HepG2 (cell line): ENCODE measurements at regions of chr14 and their contacts with region 1.

Region 1: DNA sequence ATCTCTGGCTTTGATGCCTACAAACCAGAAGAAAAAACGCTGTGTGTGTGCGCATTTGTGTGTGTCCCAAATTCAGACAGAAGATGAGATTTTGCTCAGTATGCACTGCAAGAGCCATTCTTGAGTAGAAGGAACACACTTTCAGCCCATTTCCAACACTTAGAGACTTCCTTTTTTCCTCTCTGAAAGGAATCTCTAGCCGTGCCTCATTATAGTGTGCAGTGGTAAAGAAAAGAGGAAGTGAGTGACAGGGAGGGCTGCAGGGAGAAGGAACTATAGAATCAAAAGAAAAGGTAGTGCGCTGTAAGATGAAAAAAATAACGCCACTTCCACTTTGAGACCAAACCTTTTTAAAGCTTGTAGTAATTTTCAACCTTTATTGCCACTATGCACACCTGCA is 1400.9 kb upstream of the FLRT2 start:
- DNase-seq: no peak
- ATAC-seq: no peak
- H3K4me3 ChIP-seq: no peak overlapping the region
- H3K27ac ChIP-seq: no peak overlapping the region
- H3K4me1 ChIP-seq: no peaks in the 10 kb centered on the region
- H3K27me3 ChIP-seq: no peaks in the 10 kb centered on the region
- CTCF ChIP-seq: no peak
- EP300 ChIP-seq: no peak
- POLR2A ChIP-seq: no peak
- RAD21 ChIP-seq: no peak

Region 2: DNA sequence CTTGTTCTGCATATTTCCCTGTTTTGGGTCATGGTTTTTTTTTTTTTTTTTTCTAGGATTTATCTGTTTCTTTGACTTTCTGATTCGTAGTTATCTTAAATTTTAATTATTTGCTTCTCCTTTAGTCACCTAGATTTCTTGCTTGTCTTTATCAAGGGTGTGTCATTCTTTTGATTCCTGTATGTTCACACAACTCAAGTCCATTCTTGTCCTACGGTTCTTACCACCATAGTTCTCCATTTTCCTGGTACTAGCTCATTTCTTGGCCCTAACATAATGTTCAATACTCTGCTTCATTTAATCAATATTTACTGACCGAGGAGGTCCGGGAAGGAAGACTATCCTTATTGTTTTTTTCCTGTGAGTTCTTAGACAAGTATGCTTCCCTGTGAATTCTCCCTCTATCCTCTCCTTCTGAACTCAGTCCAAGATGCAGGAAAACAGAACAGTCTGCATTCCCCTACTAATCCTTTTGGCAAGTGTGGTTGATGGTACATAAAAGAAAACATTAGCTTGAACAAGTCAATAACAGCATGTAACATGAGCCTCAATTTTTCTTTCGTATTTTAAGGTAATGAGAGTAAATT is 1249.0 kb before region 1 on chr14:
- CTCF ChIA-PET with region 1: no interaction called
- POLR2A ChIA-PET with region 1: no interaction called
- in situ Hi-C with region 1: no loop called
- intact Hi-C with region 1: loop called (anchors 10 kb)
- DNase-seq: no peak
- ATAC-seq: no peak
- H3K4me3 ChIP-seq: no peak overlapping the region
- H3K27ac ChIP-seq: no peak overlapping the region
- H3K4me1 ChIP-seq: no peaks in the 10 kb centered on the region
- H3K27me3 ChIP-seq: no peaks in the 10 kb centered on the region
- CTCF ChIP-seq: no peak
- EP300 ChIP-seq: no peak
- POLR2A ChIP-seq: no peak
- RAD21 ChIP-seq: no peak

Region 3: DNA sequence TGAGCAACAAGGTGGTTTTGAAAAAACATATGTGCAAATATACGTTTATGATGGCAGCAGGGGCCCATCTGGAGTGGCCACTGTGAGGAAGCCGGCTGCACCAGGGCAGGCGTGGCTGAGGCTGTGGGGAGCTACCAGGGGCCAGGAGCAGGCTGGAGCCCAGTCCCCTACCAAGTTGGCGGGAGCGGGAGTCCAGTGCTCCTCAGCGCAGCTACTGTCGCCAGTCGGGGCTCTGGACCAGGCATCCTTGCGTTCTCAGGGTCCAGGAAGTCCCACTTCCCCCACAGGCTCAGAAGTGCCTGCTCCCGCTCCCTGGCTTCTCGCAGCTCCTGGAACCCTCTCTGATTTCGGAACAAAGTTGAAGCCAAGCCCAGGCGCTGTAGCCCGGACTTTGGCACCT is 23.4 kb after region 1 on chr14:
- CTCF ChIA-PET with region 1: no interaction called
- POLR2A ChIA-PET with region 1: no interaction called
- in situ Hi-C with region 1: no loop called
- intact Hi-C with region 1: no loop called
- DNase-seq: no peak
- ATAC-seq: no peak
- H3K4me3 ChIP-seq: no peak overlapping the region
- H3K27ac ChIP-seq: no peak overlapping the region
- H3K4me1 ChIP-seq: no peaks in the 10 kb centered on the region
- H3K27me3 ChIP-seq: no peaks in the 10 kb centered on the region
- CTCF ChIP-seq: no peak
- EP300 ChIP-seq: no peak
- POLR2A ChIP-seq: no peak
- RAD21 ChIP-seq: no peak